ENCODE measurements at regions of chr18 and their contacts with region 1.

Region 1: GRCh38 chr18:58241877-58242276 is 197.9 kb downstream of the NEDD4L start:
- H3K4me3 ChIP-seq: no peak overlapping the region
- H3K27ac ChIP-seq: no peak overlapping the region
- H3K4me1 ChIP-seq: peaks cover 25% of the 10 kb centered on the region
- CTCF ChIP-seq: no peak

Region 2: DNA sequence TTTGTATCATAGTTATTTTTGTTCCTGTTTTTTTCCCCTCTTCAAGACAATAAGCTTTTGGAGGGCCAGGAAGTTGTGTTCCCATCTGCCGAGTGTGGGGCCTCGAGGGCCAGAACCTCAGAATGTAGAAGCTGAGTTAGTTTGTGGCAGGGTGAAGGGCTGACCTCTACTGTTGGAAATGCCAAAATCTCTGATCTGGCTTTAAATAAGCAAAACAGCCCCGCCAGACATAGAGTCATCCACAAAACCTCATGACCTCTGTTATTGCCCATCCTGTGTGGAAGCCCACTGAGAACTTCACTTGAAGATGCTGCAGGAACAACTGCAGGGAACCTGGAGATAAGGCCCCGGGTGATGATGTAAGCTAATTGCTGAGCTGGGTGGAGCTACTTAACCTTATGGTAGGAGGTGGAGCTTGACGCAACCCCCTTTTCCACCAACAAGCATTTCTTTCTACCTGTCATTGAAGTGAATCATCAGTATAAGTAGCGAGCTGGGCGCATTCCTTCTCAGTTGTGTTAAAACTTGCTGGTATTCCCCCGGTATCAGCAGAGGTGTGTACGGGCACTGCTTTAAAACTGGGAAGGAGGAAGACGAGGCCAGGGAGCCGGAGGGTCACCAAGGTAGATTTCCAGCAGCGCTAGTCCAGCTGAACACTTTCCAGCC is 20.7 kb before region 1 on chr18:
- CTCF ChIA-PET with region 1: interaction called, 3 read pairs
- POLR2A ChIA-PET with region 1: interaction called, 21 read pairs
- H3K4me3 ChIP-seq: peak overlapping the region; percentile 49
- H3K27ac ChIP-seq: peak overlapping the region; percentile 35
- H3K4me1 ChIP-seq: peaks cover 39% of the 10 kb centered on the region
- CTCF ChIP-seq: no peak; the same call in 1 of the 2 replicates

Region 3: GRCh38 chr18:58378411-58379379 is 136.8 kb after region 1 on chr18:
- CTCF ChIA-PET with region 1: no interaction called
- POLR2A ChIA-PET with region 1: no interaction called
- H3K4me3 ChIP-seq: no peak overlapping the region
- H3K27ac ChIP-seq: no peak overlapping the region
- H3K4me1 ChIP-seq: no peaks in the 10 kb centered on the region
- CTCF ChIP-seq: no peak

Measured in HEK293 (cell line).